Left ventricle myocardium inferior (tissue), 1 donor: ENCODE measurements at regions of chr6 and their contacts with region 1.

Region 1: GRCh38 chr6:111483736-111484632 is 966 bp upstream of the REV3L start:
- DNase-seq: peak; percentile 95
- H3K4me3 ChIP-seq: peak overlapping the region; percentile 96
- H3K27ac ChIP-seq: peak overlapping the region; percentile 100
- H3K4me1 ChIP-seq: peaks cover 57% of the 10 kb centered on the region
- H3K27me3 ChIP-seq: no peaks in the 10 kb centered on the region
- CTCF ChIP-seq: no peak

Region 2: DNA sequence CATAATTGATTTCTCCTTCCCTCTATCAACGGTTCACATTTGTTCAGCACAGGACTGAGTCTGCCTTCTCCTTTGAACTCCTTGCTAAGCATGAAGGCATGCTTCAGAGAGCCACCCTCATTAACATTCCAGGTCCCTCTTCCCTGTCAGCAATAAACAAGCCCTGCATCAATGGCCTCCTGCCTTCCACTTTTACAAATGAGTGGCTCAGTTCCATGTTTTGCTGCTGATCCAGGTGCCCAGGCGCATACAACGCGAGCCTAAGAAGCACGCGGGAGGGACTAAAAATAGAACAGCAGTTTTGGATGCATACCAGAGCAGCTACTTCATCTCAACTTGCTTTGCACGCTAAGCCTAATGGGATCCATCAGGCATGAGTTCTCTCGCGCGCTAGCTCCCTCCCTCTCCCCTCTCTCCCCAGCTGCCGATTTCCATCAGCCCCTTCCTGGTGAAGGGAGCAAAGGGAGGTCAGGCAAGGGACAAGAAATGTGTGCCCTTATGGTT is 68.3 kb after region 1 on chr6:
- intact Hi-C with region 1: loop called (anchors 10 kb)
- DNase-seq: peak; percentile 61
- H3K4me3 ChIP-seq: peak overlapping the region; percentile 27
- H3K27ac ChIP-seq: peak overlapping the region; percentile 78
- H3K4me1 ChIP-seq: peaks cover 55% of the 10 kb centered on the region
- H3K27me3 ChIP-seq: no peaks in the 10 kb centered on the region
- CTCF ChIP-seq: no peak